ENCODE measurements at regions of chr2 and their contacts with region 1.

Region 1: DNA sequence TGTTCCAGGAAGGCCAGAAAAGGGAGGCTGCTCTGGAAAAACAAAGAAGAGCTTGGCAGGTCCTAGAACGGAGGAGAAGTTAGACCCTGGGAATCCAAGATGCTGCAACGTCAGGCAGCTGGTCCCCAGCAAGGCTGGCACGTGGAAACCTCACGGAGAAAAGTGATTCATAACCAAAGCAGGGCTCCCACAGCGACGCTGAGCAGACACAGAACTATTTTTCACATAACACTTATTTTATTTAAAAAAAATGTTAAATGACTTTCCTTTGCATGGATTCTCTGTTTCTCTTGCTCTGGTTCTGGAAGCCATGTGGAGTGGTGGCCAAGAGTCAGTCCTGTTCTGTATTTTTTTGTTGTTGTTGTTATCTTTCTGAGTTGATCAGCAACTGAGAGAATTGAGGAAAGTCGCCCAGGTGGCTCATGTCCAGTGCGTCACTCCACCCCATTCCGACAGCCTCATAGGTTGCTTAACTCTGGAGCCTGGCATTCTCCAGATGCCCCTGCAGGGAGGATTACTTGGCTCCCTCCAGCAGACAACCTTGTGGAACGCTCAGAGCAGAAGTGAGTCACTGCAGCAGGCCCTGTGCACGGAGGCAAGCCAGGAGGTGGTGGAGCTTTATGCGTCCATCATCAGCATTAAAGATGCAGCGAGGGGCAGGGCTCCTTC is 229.9 kb upstream of the HDAC4 start:
- DNase-seq: peak; percentile 74 to 86
- ATAC-seq: peak; percentile 93 to 99
- H3K4me3 ChIP-seq: no peak overlapping the region
- H3K27ac ChIP-seq: peak overlapping the region in 3 of 4 donors; percentile 24 to 64 (median 30)
- H3K4me1 ChIP-seq: peaks cover 0 to 10% of the 10 kb centered on the region in 2 donors
- H3K27me3 ChIP-seq: no peaks in the 10 kb centered on the region
- CTCF ChIP-seq: no peak
- POLR2A ChIP-seq: no peak

Region 2: DNA sequence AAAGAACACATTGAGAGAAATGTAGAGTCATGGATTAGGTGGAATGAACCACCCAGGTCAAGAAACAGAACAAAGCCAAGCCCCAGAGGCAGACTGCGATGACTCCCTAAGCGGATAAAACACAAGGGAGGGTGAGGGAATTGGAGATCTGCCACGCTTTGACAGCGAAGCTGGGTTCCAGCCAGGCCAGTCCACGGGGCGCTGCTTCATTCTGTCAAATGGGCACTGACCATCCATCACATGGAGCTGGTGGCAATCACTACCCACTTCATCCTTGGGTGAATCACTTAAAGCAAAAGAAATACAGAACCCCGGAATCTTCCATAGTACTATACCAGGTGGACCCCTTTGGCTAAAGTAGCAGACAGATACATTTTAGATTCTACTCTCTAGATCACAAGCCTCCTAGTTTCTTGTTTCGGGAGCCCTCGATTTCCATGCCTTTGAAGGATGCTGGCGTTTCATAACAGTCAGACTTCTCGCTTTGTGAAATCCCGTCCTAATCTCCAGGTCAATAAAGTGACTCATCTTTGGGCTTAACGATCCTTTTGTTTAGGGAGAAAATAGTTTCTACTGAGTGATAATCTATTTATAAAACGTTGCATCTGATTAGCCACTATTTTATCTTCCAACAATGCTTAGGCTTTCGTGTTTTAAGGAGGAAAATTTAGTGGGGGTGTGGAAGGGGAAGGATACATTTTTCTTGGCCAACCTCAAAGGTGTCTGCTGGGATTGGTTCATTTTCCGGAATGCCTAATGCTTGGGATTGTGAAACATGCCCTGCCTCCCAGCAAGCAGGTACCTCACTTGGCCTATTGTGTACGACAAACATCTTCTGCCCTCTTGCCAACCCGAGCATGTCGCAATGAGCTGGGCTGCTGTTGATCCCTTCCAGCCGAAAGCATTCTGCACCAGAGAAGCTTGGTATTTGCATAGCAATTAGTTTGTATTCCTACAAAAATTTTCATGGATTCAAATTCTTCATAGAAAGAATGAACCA is 185.8 kb before region 1 on chr2:
- in situ Hi-C with region 1: no loop called
- intact Hi-C with region 1: loop called (anchors 10 kb)
- DNase-seq: peak in 1 of 2 donors; percentile 57
- ATAC-seq: peak; percentile 74 to 78
- H3K4me3 ChIP-seq: no peak overlapping the region
- H3K27ac ChIP-seq: peak overlapping the region in 1 of 4 donors; percentile 52
- H3K4me1 ChIP-seq: peaks cover 7 to 13% of the 10 kb centered on the region in 2 donors
- H3K27me3 ChIP-seq: peaks cover 4 to 7% (median 7%) of the 10 kb centered on the region in 3 donors
- CTCF ChIP-seq: no peak
- POLR2A ChIP-seq: no peak

Region 3: GRCh38 chr2:239544143-239544917 is 86.4 kb before region 1 on chr2:
- in situ Hi-C with region 1: no loop called
- intact Hi-C with region 1: loop called (anchors 5 kb)
- DNase-seq: peak in 1 of 2 donors; percentile 4
- ATAC-seq: no peak
- H3K4me3 ChIP-seq: no peak overlapping the region
- H3K27ac ChIP-seq: no peak overlapping the region
- H3K4me1 ChIP-seq: peaks cover 7 to 10% of the 10 kb centered on the region in 2 donors
- H3K27me3 ChIP-seq: no peaks in the 10 kb centered on the region
- CTCF ChIP-seq: no peak
- POLR2A ChIP-seq: no peak

Region 4: GRCh38 chr2:239690651-239691631 is 60.2 kb after region 1 on chr2:
- in situ Hi-C with region 1: no loop called
- intact Hi-C with region 1: loop called (anchors 2 kb)
- DNase-seq: peak; percentile 68
- ATAC-seq: peak; percentile 72 to 73
- H3K4me3 ChIP-seq: peak overlapping the region in 2 of 4 donors; percentile 0 to 25
- H3K27ac ChIP-seq: peak overlapping the region; percentile 75 to 83 (median 81)
- H3K4me1 ChIP-seq: peaks cover 33 to 41% of the 10 kb centered on the region in 2 donors
- H3K27me3 ChIP-seq: no peaks in the 10 kb centered on the region
- CTCF ChIP-seq: peak in 2 of 5 experiments; percentile 21 to 22
- POLR2A ChIP-seq: peak in 1 of 2 donors; percentile 63

Region 5: DNA sequence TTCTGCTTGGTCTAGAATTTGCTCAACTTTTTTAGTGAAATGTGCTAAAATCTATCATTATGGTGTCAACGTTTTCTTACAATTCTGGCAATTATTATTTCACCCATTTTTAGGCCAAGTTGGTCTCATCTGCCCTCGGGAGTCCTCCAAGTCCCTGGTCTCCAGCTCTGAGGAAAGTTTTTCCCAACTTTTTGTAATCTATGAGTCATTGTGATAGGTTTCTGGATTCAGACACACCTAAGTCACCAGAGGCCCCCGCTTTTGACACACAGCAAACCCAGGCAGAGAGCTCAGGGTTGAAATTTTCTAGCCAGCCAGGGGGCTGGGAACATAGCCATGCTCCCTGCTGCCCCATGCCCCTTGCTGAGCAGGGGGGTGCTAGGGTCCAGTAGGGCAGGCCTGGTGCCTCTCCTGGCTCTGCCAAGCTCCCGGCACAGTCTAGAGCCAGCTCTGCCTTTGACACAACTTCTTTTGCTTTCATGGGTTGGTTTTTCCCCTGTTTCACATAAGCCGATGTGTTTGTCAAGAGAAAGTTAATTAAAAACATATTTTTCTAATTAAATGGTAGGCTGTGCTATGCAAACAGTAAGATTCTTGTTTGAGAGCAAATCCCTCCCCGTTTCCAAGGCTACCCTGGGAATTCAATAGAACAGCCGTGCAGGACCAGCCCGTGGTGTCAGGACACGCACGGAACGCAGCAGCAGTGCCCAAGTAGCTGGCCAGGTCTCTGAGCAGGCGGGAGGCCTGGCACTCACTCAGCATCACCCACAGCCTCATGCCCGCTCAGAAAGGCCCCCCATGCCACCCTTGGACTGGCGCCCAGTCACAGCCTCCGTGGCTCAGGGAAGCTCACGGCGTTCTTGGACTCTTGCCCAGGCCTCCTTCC is 1342.1 kb after region 1 on chr2:
- in situ Hi-C with region 1: no loop called
- intact Hi-C with region 1: no loop called
- DNase-seq: no peak
- ATAC-seq: peak; percentile 16 to 44
- H3K4me3 ChIP-seq: no peak overlapping the region
- H3K27ac ChIP-seq: no peak overlapping the region
- H3K4me1 ChIP-seq: no peaks in the 10 kb centered on the region
- H3K27me3 ChIP-seq: peaks cover 0 to 7% (median 4%) of the 10 kb centered on the region in 3 donors
- CTCF ChIP-seq: no peak
- POLR2A ChIP-seq: no peak